Activated CD4-positive, alpha-beta memory T cell treated with anti-CD3 and anti-CD28 coated beads for 36 hours (primary cell): ENCODE measurements at regions of chr4 and their contacts with region 1.

Region 1: DNA sequence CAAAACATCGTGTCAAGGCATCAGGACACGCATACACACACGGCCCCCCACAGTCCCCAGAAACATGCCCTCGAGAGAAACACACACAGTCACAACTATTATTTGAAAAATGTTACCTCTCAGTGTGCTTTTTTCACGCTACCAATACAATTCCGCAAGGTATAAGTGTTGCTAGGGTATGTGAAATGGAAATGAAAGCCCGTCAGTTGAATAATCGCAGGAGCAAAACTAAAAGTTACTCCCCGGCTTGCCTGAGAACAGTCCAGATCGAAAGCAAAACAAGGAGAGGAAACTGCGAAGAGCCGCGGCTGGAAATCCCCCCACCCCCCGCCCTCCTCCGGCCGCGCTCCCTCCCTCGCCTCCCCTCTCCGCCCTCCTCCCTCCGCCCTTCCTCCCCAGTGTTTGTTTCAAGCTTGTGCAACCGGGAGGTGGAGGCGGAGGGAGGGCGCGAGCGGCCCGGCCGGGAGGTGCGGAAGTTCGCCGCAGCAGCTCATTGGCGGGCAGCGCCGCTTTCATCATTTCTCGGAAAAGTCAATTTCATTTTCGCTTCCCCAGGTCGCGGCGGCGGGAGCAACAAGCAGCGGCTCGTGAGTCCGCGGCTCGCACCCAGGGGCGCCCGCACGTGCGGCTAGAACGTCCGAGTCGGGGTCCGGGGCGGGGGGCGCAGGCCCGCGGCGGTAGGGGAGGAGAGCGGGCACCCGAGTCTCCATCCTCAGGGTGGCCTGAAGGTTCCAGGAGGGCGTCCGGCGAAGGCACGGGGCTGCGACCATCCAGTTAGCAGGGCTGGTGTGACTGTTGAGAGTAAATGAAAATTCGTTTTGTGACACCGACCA is at the start of gene IRF2:
- DNase-seq: peak; percentile 99
- H3K4me3 Mint-ChIP-seq: peak within 1 kb of the TSS; percentile 99
- H3K27ac Mint-ChIP-seq: peak within 1 kb of the TSS; percentile 100
- H3K4me1 Mint-ChIP-seq: peaks cover 57% of the 10 kb centered on the region
- H3K27me3 Mint-ChIP-seq: no peaks in the 10 kb centered on the region
- total RNA-seq, gene IRF2: 48.1 to 50.9 TPM

Region 2: DNA sequence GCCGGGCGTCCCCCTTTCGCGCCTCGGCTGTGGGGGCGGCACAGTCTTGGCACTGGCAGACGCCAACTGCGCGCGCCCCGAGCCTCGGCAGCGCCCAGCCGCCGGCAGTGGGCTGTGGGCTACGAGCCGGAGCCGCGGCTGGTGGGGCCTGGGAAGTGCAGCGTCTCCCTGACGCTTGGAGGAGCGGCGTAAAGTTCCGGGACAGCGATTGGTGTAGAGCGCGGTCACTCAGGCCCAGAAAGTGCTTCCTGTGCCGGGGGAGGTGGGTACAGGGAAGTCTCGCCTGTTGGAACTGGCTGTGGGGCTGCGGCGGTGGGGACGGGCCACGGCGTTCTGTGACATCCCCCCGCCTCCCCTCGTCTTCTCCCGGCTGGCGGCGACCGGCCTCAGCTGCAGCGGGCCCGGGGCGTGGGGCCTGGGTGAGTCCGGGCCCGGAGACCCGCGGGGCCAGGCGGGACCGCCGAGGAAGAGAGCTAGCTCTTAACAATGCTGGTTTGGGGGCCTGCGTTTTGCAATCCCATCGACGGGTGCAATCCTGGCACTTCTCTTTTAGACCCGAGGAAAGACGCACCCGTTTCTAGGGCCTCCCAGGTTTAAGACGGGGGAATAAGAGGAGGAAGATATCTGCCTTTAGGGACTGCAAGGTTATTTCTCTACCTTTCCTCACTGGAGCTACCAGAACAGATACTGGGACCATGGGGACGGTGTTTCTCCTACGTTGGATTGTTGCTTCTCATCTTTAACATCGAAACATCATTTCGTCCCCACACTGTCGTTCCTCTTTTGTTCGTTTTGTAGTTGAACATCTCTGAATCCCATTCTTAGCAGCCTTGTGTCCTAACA is 815.2 kb before region 1 on chr4 and contains the starts of genes RWDD4 and TRAPPC11:
- CTCF ChIA-PET with region 1: no interaction called
- POLR2A ChIA-PET with region 1: no interaction called
- intact Hi-C with region 1: no loop called
- DNase-seq: peak; percentile 98
- H3K4me3 Mint-ChIP-seq: peak within 1 kb of the TSS; percentile 85
- H3K27ac Mint-ChIP-seq: peak within 1 kb of the TSS; percentile 80
- H3K4me1 Mint-ChIP-seq: peaks cover 35% of the 10 kb centered on the region
- H3K27me3 Mint-ChIP-seq: no peaks in the 10 kb centered on the region
- total RNA-seq, gene RWDD4: 19.4 to 19.8 TPM
- total RNA-seq, gene TRAPPC11: 29.7 to 30.2 TPM

Region 3: GRCh38 chr4:184282251-184282713 is 192.2 kb before region 1 on chr4:
- CTCF ChIA-PET with region 1: interaction called, 3 read pairs
- POLR2A ChIA-PET with region 1: interaction called, 26 read pairs
- intact Hi-C with region 1: loop called (anchors 1 kb)
- DNase-seq: peak; percentile 87
- H3K4me3 Mint-ChIP-seq: peak overlapping the region; percentile 10
- H3K27ac Mint-ChIP-seq: peak overlapping the region; percentile 91
- H3K4me1 Mint-ChIP-seq: peaks cover 71% of the 10 kb centered on the region
- H3K27me3 Mint-ChIP-seq: peaks cover 4% of the 10 kb centered on the region

Region 4: GRCh38 chr4:184417802-184418511 is 56.5 kb before region 1 on chr4:
- CTCF ChIA-PET with region 1: no interaction called
- POLR2A ChIA-PET with region 1: interaction called, 13 read pairs
- intact Hi-C with region 1: loop called (anchors 1 kb)
- DNase-seq: peak; percentile 23
- H3K4me3 Mint-ChIP-seq: peak overlapping the region; percentile 23
- H3K27ac Mint-ChIP-seq: peak overlapping the region; percentile 91
- H3K4me1 Mint-ChIP-seq: peaks cover 90% of the 10 kb centered on the region
- H3K27me3 Mint-ChIP-seq: no peaks in the 10 kb centered on the region

Region 5: GRCh38 chr4:184506527-184507121 is 32.1 kb after region 1 on chr4:
- CTCF ChIA-PET with region 1: interaction called, 8 read pairs
- POLR2A ChIA-PET with region 1: interaction called, 60 read pairs
- intact Hi-C with region 1: loop called (anchors 1 kb)
- DNase-seq: peak; percentile 72
- H3K4me3 Mint-ChIP-seq: no peak overlapping the region
- H3K27ac Mint-ChIP-seq: no peak overlapping the region
- H3K4me1 Mint-ChIP-seq: peaks cover 32% of the 10 kb centered on the region
- H3K27me3 Mint-ChIP-seq: no peaks in the 10 kb centered on the region

Region 6: GRCh38 chr4:184583738-184584502 is 109.4 kb after region 1 on chr4:
- CTCF ChIA-PET with region 1: no interaction called
- POLR2A ChIA-PET with region 1: no interaction called
- intact Hi-C with region 1: loop called (anchors 5 kb)
- DNase-seq: peak; percentile 39
- H3K4me3 Mint-ChIP-seq: no peak overlapping the region
- H3K27ac Mint-ChIP-seq: no peak overlapping the region
- H3K4me1 Mint-ChIP-seq: peaks cover 20% of the 10 kb centered on the region
- H3K27me3 Mint-ChIP-seq: no peaks in the 10 kb centered on the region

Region 7: GRCh38 chr4:184627765-184628480 is 153.4 kb after region 1 on chr4:
- CTCF ChIA-PET with region 1: no interaction called
- POLR2A ChIA-PET with region 1: no interaction called
- intact Hi-C with region 1: no loop called
- DNase-seq: no peak
- H3K4me3 Mint-ChIP-seq: no peak overlapping the region
- H3K27ac Mint-ChIP-seq: no peak overlapping the region
- H3K4me1 Mint-ChIP-seq: peaks cover 41% of the 10 kb centered on the region
- H3K27me3 Mint-ChIP-seq: no peaks in the 10 kb centered on the region